Spleen (tissue), 13 donors: ENCODE measurements at regions of chr12 and their contacts with region 1.

Region 1: GRCh38 chr12:42589465-42590329 is at the start of gene PRICKLE1:
- DNase-seq: peak; percentile 82
- H3K4me3 ChIP-seq: peak within 1 kb of the TSS; percentile 51 to 93 (median 67)
- H3K27ac ChIP-seq: peak within 1 kb of the TSS in 7 of 8 donors; percentile 63 to 84 (median 80)
- H3K4me1 ChIP-seq: peaks cover 0 to 47% (median 23%) of the 10 kb centered on the region in 6 donors
- H3K27me3 ChIP-seq: peaks cover 0 to 76% (median 19%) of the 10 kb centered on the region in 7 donors
- CTCF ChIP-seq: no peak
- POLR2A ChIP-seq: no peak
- total RNA-seq, gene PRICKLE1: 14.4 to 73.0 (median 35.8) TPM

Region 2: DNA sequence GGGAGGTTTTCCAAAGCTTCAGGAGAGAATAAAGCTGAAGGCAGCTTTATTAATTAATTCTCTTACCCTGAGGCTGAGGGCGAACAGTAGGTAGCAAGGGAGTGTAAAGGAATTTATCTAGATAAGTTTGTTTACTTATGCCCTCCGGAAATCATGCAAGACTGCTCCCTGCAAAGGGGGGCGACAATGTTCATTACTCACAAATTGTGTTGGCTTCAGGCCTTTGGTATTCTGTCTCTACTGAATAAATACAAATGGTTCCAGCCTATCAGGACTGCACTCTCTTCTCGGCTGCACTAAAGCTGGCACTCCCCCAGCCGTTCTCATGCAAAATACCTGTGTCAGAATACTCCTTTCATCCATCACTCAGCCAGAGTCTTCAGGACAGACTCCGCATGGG is 142.9 kb before region 1 on chr12:
- intact Hi-C with region 1: no loop called
- DNase-seq: no peak
- H3K4me3 ChIP-seq: no peak overlapping the region
- H3K27ac ChIP-seq: peak overlapping the region in 4 of 8 donors; percentile 5 to 62 (median 32)
- H3K4me1 ChIP-seq: peaks cover 4 to 49% (median 20%) of the 10 kb centered on the region in 6 donors
- H3K27me3 ChIP-seq: no peaks in the 10 kb centered on the region
- CTCF ChIP-seq: no peak
- POLR2A ChIP-seq: no peak

Region 3: GRCh38 chr12:42524716-42525115 is 65.0 kb before region 1 on chr12:
- intact Hi-C with region 1: no loop called
- DNase-seq: no peak
- H3K4me3 ChIP-seq: no peak overlapping the region
- H3K27ac ChIP-seq: no peak overlapping the region
- H3K4me1 ChIP-seq: no peaks in the 10 kb centered on the region
- H3K27me3 ChIP-seq: no peaks in the 10 kb centered on the region
- CTCF ChIP-seq: no peak
- POLR2A ChIP-seq: no peak

Region 4: GRCh38 chr12:42641221-42641885 is 51.7 kb after region 1 on chr12:
- intact Hi-C with region 1: loop called (anchors 5 kb)
- DNase-seq: no peak
- H3K4me3 ChIP-seq: no peak overlapping the region
- H3K27ac ChIP-seq: no peak overlapping the region
- H3K4me1 ChIP-seq: no peaks in the 10 kb centered on the region
- H3K27me3 ChIP-seq: no peaks in the 10 kb centered on the region
- CTCF ChIP-seq: no peak
- POLR2A ChIP-seq: no peak

Region 5: DNA sequence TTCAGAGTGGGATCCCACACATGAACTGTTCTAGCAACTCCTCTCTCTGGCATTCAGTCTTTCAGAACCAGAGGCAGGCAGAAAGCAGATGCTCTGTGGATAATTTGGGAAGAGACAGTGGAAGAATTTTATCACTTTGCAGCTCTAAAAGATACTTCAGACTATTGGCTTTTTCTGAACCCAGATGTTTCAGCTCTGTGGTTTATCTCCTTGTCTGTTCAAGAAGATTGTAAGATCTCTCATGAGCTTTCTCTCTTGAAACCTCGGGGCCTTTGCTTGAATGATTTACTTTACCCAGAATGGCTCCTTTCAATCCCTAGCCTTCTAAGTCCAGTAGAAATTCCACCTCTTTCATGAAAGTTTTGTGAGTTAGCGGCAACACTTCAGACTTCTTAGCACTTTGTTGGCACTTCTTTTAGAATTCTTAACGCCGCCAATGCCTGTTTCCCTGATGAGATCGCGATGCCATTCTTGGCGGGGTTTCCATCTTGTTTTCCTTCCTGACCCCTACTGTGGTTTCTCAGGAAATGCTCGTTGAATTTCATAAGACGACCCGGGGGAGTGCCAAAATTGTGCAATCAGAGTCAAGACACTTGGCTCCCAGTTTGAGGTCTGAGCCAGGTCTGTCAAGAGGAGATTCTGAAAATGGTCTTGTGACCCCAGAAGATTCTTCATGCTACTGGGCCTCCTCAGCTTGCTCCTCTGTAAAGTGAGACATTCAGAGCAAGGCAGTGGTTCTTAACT is 106.9 kb after region 1 on chr12:
- intact Hi-C with region 1: no loop called
- DNase-seq: no peak
- H3K4me3 ChIP-seq: no peak overlapping the region
- H3K27ac ChIP-seq: peak overlapping the region in 6 of 8 donors; percentile 12 to 53 (median 43)
- H3K4me1 ChIP-seq: peaks cover 5 to 23% (median 7%) of the 10 kb centered on the region in 6 donors
- H3K27me3 ChIP-seq: no peaks in the 10 kb centered on the region
- CTCF ChIP-seq: no peak
- POLR2A ChIP-seq: no peak

Region 6: DNA sequence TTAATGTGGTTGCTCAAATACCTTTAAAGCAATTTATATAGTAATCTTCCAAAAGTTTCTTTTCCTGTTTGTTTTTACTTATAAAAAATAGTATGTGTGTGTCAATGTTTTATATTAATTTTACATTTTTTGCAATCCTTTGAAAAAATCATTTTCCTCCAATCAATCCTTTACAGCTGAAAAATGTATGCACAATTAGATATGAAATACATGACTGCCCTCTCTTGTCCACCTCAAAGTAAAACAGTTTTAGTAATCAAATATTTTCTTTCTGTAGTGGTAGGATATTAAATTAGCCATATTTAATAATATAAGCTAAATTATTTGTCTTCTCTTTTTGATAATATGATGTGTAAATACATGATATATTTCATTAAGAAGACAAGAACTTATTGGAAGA is 692.4 kb after region 1 on chr12:
- intact Hi-C with region 1: loop called (anchors 5 kb)
- DNase-seq: no peak
- H3K4me3 ChIP-seq: no peak overlapping the region
- H3K27ac ChIP-seq: no peak overlapping the region
- H3K4me1 ChIP-seq: peaks cover 0 to 12% (median 7%) of the 10 kb centered on the region in 6 donors
- H3K27me3 ChIP-seq: no peaks in the 10 kb centered on the region
- CTCF ChIP-seq: peak in 7 of 11 experiments; percentile 16 to 50 (median 26)
- POLR2A ChIP-seq: no peak